ENCODE measurements at regions of chr19 and their contacts with region 1.

Region 1: GRCh38 chr19:1074544-1075283 is 7.7 kb downstream of the ARHGAP45 start:
- DNase-seq: peak; percentile 91 to 94 (median 93)
- H3K4me3 ChIP-seq: peak overlapping the region in 1 of 2 donors; percentile 47
- H3K4me3 Mint-ChIP-seq: peak overlapping the region in 7 of 8 donors; percentile 66 to 93 (median 82)
- H3K27ac ChIP-seq: peak overlapping the region; percentile 84
- H3K27ac Mint-ChIP-seq: peak overlapping the region; percentile 94 to 99 (median 97)
- H3K4me1 ChIP-seq: peaks cover 85% of the 10 kb centered on the region
- H3K4me1 Mint-ChIP-seq: peaks cover 27 to 68% (median 43%) of the 10 kb centered on the region in 4 donors
- H3K27me3 ChIP-seq: no peaks in the 10 kb centered on the region
- H3K27me3 Mint-ChIP-seq: no peaks in the 10 kb centered on the region

Region 2: GRCh38 chr19:913080-913748 is 161.5 kb before region 1 on chr19 and contains the start of gene R3HDM4:
- CTCF ChIA-PET with region 1: interaction called, 3 read pairs
- POLR2A ChIA-PET with region 1: interaction called, 10 read pairs
- intact Hi-C with region 1: no loop called
- DNase-seq: peak; percentile 82 to 85 (median 85)
- H3K4me3 ChIP-seq: peak within 1 kb of the TSS; percentile 58 to 69
- H3K4me3 Mint-ChIP-seq: peak within 1 kb of the TSS; percentile 82 to 90 (median 86)
- H3K27ac ChIP-seq: peak within 1 kb of the TSS; percentile 94
- H3K27ac Mint-ChIP-seq: peak within 1 kb of the TSS; percentile 88 to 95 (median 93)
- H3K4me1 ChIP-seq: peaks cover 57% of the 10 kb centered on the region
- H3K4me1 Mint-ChIP-seq: peaks cover 13 to 42% (median 28%) of the 10 kb centered on the region in 4 donors
- H3K27me3 ChIP-seq: no peaks in the 10 kb centered on the region
- H3K27me3 Mint-ChIP-seq: peaks cover 0 to 4% of the 10 kb centered on the region in 2 donors
- total RNA-seq, gene R3HDM4: 153 to 160 TPM

Region 3: GRCh38 chr19:1020868-1021425 is 53.8 kb before region 1 on chr19 and contains the start of gene TMEM259:
- CTCF ChIA-PET with region 1: interaction called, 4 read pairs
- POLR2A ChIA-PET with region 1: interaction called, 1,029 read pairs
- intact Hi-C with region 1: loop called (anchors 2 kb)
- DNase-seq: peak; percentile 98 to 99 (median 98)
- H3K4me3 ChIP-seq: peak within 1 kb of the TSS; percentile 66 to 69
- H3K4me3 Mint-ChIP-seq: peak within 1 kb of the TSS; percentile 86 to 92 (median 89)
- H3K27ac ChIP-seq: peak within 1 kb of the TSS; percentile 95
- H3K27ac Mint-ChIP-seq: peak within 1 kb of the TSS; percentile 97 to 100 (median 100)
- H3K4me1 ChIP-seq: peaks cover 54% of the 10 kb centered on the region
- H3K4me1 Mint-ChIP-seq: peaks cover 19 to 62% (median 39%) of the 10 kb centered on the region in 4 donors
- H3K27me3 ChIP-seq: no peaks in the 10 kb centered on the region
- H3K27me3 Mint-ChIP-seq: peaks cover 0 to 6% of the 10 kb centered on the region in 2 donors
- total RNA-seq, gene TMEM259: 315 to 329 TPM

Region 4: GRCh38 chr19:1026189-1027019 is 48.3 kb before region 1 on chr19 and contains the start of gene CNN2:
- CTCF ChIA-PET with region 1: interaction called, 11 read pairs
- POLR2A ChIA-PET with region 1: interaction called, 1,029 read pairs
- intact Hi-C with region 1: loop called (anchors 2 kb)
- DNase-seq: peak in 4 of 5 donors; percentile 46 to 68 (median 60)
- H3K4me3 ChIP-seq: peak within 1 kb of the TSS; percentile 91 to 97
- H3K4me3 Mint-ChIP-seq: peak within 1 kb of the TSS; percentile 97 to 99 (median 98)
- H3K27ac ChIP-seq: peak within 1 kb of the TSS; percentile 83
- H3K27ac Mint-ChIP-seq: peak within 1 kb of the TSS; percentile 93 to 98 (median 95)
- H3K4me1 ChIP-seq: peaks cover 38% of the 10 kb centered on the region
- H3K4me1 Mint-ChIP-seq: peaks cover 11 to 38% (median 23%) of the 10 kb centered on the region in 4 donors
- H3K27me3 ChIP-seq: no peaks in the 10 kb centered on the region
- H3K27me3 Mint-ChIP-seq: peaks cover 0 to 2% of the 10 kb centered on the region in 2 donors
- total RNA-seq, gene CNN2: 263 to 266 TPM

Region 5: DNA sequence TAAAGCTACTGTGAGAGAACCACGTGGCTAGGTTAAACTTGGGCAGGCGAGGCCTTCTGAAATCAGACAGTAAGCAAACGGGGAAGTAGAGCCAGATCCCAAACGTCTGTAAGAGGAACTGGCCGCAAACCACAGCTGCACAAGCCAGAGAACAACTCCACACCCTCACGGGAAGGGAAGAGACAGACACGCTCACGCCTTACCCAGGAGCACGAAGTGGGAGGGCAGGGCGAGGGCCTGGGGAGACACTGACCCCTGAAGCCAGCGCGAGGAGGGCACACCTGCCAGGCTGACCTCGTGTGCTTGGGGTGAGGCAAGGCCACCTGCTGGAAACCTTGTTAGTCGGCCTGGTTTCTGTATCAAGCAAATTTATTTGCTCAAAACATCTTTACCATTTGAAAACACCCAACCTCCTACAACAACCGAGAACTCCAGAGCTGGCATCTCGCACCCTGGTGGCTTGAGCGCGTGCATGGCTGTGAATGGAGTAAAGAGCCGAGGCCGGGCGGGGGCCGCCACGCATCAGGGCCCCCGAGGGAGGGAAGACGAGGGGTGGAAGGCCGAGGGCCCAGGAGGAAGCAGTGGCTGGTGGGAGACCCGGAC is 13.2 kb after region 1 on chr19:
- CTCF ChIA-PET with region 1: interaction called, 35 read pairs
- POLR2A ChIA-PET with region 1: interaction called, 3,893 read pairs
- intact Hi-C with region 1: loop called (anchors 1 kb)
- DNase-seq: peak; percentile 59 to 78 (median 65)
- H3K4me3 ChIP-seq: no peak overlapping the region
- H3K4me3 Mint-ChIP-seq: peak overlapping the region in 5 of 8 donors; percentile 25 to 82 (median 69)
- H3K27ac ChIP-seq: peak overlapping the region; percentile 74
- H3K27ac Mint-ChIP-seq: peak overlapping the region; percentile 72 to 97 (median 93)
- H3K4me1 ChIP-seq: peaks cover 64% of the 10 kb centered on the region
- H3K4me1 Mint-ChIP-seq: peaks cover 14 to 67% (median 32%) of the 10 kb centered on the region in 4 donors
- H3K27me3 ChIP-seq: no peaks in the 10 kb centered on the region
- H3K27me3 Mint-ChIP-seq: no peaks in the 10 kb centered on the region

Region 6: DNA sequence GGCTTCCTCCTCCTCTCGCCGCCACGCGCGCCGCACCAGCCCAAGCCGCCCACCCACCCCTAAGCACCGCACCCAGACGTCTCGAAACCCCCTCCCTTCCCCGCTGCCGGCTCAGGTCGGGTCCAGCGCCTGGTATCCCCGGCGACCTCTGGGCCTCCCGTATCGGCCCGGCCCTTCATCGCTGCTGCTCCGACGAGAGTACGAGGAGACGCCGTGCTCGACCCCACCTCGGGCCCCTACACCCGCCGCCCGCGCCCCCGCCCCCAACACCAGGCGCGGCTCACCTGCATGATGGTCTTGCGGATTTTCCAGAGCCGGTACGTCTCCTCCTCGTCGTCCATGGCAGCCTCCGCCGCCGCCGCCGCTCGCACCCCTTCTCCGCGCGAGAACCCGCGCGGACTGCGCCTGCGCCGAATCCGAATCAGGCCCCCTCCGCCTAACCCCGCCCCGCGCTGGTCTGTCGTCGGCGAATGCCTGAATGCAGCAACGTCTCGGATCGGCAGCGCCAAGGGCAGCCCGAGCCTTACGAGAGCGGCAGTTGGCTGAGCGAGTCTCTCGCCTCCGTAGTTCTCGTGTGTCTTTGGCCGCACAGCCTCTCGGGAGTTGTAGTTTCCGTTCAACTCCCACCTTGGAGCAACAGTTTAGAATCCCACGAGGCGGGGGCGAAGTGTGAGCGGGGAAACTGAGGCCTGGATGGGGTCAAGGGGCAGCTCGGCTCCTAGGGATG is 20.4 kb after region 1 on chr19 and contains the start of gene POLR2E:
- CTCF ChIA-PET with region 1: interaction called, 3 read pairs
- POLR2A ChIA-PET with region 1: interaction called, 3,893 read pairs
- intact Hi-C with region 1: loop called (anchors 2 kb)
- DNase-seq: peak; percentile 97 to 99 (median 98)
- H3K4me3 ChIP-seq: peak within 1 kb of the TSS; percentile 54 to 65
- H3K4me3 Mint-ChIP-seq: peak within 1 kb of the TSS; percentile 83 to 96 (median 90)
- H3K27ac ChIP-seq: peak within 1 kb of the TSS; percentile 85
- H3K27ac Mint-ChIP-seq: peak within 1 kb of the TSS; percentile 87 to 97 (median 93)
- H3K4me1 ChIP-seq: peaks cover 44% of the 10 kb centered on the region
- H3K4me1 Mint-ChIP-seq: peaks cover 22 to 75% (median 46%) of the 10 kb centered on the region in 4 donors
- H3K27me3 ChIP-seq: no peaks in the 10 kb centered on the region
- H3K27me3 Mint-ChIP-seq: no peaks in the 10 kb centered on the region
- total RNA-seq, gene POLR2E: 76.0 to 80.0 TPM

Region 7: DNA sequence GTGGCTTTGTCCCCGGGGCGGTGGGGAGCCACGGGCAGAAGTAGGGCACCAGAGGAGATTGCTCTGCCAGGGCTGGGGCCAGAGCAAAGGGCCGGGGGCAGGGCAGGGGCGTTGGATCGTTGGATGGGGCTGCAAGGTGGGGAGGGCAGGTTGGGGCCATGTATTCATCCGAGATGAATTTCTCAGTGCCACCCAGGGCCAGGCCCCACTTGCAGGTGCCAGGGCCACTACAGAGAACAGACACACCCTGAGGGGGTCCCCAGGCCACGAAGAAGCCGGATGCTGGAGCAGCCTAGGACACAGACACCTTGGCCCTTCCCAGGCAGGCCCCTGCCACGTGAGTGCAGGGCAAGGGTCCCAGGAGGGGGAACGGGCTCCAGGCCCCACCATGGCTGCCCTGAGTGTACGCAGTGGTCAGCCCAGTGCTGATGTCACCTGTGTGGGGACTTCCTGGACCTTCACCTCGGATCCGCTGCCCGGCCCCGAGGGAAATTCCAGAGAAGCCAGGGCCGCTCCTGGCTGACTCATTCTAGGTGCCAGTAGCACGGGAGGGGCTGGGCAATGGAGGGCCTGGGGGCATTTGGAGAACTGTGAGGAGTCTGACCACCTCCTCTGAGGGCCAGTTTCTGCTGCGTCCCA is 108.9 kb after region 1 on chr19:
- CTCF ChIA-PET with region 1: no interaction called
- POLR2A ChIA-PET with region 1: no interaction called
- intact Hi-C with region 1: no loop called
- DNase-seq: peak in 1 of 5 donors; percentile 17
- H3K4me3 ChIP-seq: no peak overlapping the region
- H3K4me3 Mint-ChIP-seq: no peak overlapping the region
- H3K27ac ChIP-seq: no peak overlapping the region
- H3K27ac Mint-ChIP-seq: no peak overlapping the region
- H3K4me1 ChIP-seq: peaks cover 12% of the 10 kb centered on the region
- H3K4me1 Mint-ChIP-seq: peaks cover 6 to 12% (median 7%) of the 10 kb centered on the region in 4 donors
- H3K27me3 ChIP-seq: no peaks in the 10 kb centered on the region
- H3K27me3 Mint-ChIP-seq: no peaks in the 10 kb centered on the region

Measured in CD4-positive, alpha-beta memory T cell (primary cell).